HepG2 (cell line): ENCODE measurements at regions of chr5 and their contacts with region 1.

Region 1: GRCh38 chr5:76715736-76716455 is at the start of gene F2R:
- DNase-seq: peak; percentile 24
- ATAC-seq: peak; percentile 92
- H3K4me3 ChIP-seq: peak within 1 kb of the TSS; percentile 84 to 86 (median 86)
- H3K27ac ChIP-seq: no peak within 1 kb of the TSS
- H3K4me1 ChIP-seq: peaks cover 27% of the 10 kb centered on the region
- H3K27me3 ChIP-seq: no peaks in the 10 kb centered on the region
- CTCF ChIP-seq: peak; percentile 58
- EP300 ChIP-seq: no peak
- POLR2A ChIP-seq: no peak; a peak in 1 of 4 replicates
- RAD21 ChIP-seq: peak; percentile 84
- total RNA-seq, gene F2R: 4.6 and 8.3 TPM in 2 replicates

Region 2: DNA sequence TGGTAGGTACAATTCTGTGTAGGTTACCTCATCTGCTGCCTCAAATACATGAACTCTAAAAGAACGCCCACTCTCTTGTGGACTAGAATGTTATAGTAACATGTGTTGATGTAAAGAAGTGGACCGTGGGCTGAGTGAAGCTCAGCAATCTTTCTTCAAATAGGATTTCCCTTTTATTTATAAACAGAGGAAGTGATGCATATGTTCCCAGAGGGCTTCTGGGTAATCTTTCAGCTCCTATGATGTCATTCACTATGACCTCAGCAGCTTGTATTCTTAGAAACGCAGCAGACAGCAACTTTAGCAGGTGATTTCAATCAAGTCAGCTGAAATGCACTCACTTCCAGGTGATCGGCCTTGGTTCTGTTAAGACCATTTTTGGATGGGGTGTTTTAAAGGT is 107.1 kb before region 1 on chr5:
- CTCF ChIA-PET with region 1: no interaction called
- POLR2A ChIA-PET with region 1: no interaction called
- in situ Hi-C with region 1: no loop called
- intact Hi-C with region 1: no loop called
- DNase-seq: no peak
- ATAC-seq: no peak
- H3K4me3 ChIP-seq: no peak overlapping the region
- H3K27ac ChIP-seq: no peak overlapping the region
- H3K4me1 ChIP-seq: no peaks in the 10 kb centered on the region
- H3K27me3 ChIP-seq: no peaks in the 10 kb centered on the region
- CTCF ChIP-seq: no peak
- EP300 ChIP-seq: no peak
- POLR2A ChIP-seq: no peak
- RAD21 ChIP-seq: no peak

Region 3: DNA sequence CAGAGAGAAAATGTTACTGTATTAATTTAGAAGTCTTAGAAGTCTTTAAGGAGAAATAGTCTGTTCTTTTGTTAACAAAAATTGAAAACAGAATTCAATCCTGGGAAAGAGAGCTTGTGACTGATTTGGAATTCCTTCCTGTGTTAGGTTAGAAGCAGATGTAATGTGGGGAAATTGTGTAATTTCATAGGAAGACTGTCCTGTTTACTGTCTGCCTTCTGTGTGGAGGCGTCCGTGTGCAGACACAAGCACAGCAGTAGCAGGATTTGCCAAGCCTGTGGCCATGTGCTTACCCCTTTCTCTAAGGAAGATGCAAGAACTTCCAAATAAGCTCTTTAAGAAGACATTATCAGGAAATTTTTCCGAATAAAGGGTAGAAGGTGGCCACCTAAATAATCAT is 36.7 kb before region 1 on chr5:
- CTCF ChIA-PET with region 1: no interaction called
- POLR2A ChIA-PET with region 1: no interaction called
- in situ Hi-C with region 1: no loop called
- intact Hi-C with region 1: no loop called
- DNase-seq: no peak
- ATAC-seq: no peak
- H3K4me3 ChIP-seq: no peak overlapping the region
- H3K27ac ChIP-seq: no peak overlapping the region
- H3K4me1 ChIP-seq: peaks cover 8% of the 10 kb centered on the region
- H3K27me3 ChIP-seq: no peaks in the 10 kb centered on the region
- CTCF ChIP-seq: no peak
- EP300 ChIP-seq: no peak
- POLR2A ChIP-seq: no peak
- RAD21 ChIP-seq: no peak

Region 4: GRCh38 chr5:76733049-76733417 is 17.1 kb after region 1 on chr5:
- CTCF ChIA-PET with region 1: no interaction called
- POLR2A ChIA-PET with region 1: no interaction called
- in situ Hi-C with region 1: no loop called
- intact Hi-C with region 1: no loop called
- DNase-seq: no peak
- ATAC-seq: no peak
- H3K4me3 ChIP-seq: no peak overlapping the region
- H3K27ac ChIP-seq: no peak overlapping the region
- H3K4me1 ChIP-seq: no peaks in the 10 kb centered on the region
- H3K27me3 ChIP-seq: no peaks in the 10 kb centered on the region
- CTCF ChIP-seq: no peak
- EP300 ChIP-seq: no peak
- POLR2A ChIP-seq: no peak
- RAD21 ChIP-seq: no peak

Region 5: DNA sequence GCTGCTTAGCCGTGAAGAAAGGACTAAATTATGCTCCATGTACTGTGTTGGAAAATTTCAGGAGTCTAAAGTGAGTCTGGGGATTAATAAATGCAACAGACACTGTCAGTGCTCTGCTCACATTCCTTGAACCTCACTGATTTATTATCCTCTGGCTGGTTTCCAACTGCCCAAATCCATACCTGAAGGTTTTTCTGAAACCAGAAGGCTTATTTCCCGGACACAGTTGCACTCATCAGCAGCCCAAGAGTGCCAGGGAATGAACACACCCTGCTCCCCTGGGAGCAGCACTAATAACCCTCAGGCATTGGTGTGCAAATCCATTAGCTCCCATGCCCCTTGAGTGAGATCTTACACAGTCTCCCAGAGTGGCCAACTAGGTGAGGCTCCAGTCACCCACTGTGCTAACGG is 38.8 kb after region 1 on chr5:
- CTCF ChIA-PET with region 1: no interaction called
- POLR2A ChIA-PET with region 1: no interaction called
- in situ Hi-C with region 1: no loop called
- intact Hi-C with region 1: loop called (anchors 5 kb)
- DNase-seq: no peak
- ATAC-seq: no peak
- H3K4me3 ChIP-seq: no peak overlapping the region
- H3K27ac ChIP-seq: no peak overlapping the region
- H3K4me1 ChIP-seq: peaks cover 37% of the 10 kb centered on the region
- H3K27me3 ChIP-seq: peaks cover 1 to 4% of the 10 kb centered on the region in 2 experiments; a peak in 3 of 5 replicates
- CTCF ChIP-seq: no peak
- EP300 ChIP-seq: no peak
- POLR2A ChIP-seq: no peak
- RAD21 ChIP-seq: no peak

Region 6: GRCh38 chr5:76771705-76772405 is 56.0 kb after region 1 on chr5:
- CTCF ChIA-PET with region 1: interaction called, 11 read pairs
- POLR2A ChIA-PET with region 1: no interaction called
- in situ Hi-C with region 1: loop called (anchors 5 kb)
- intact Hi-C with region 1: loop called (anchors 1 kb)
- DNase-seq: no peak
- ATAC-seq: peak; percentile 42; the same call in 1 of the 3 replicates
- H3K4me3 ChIP-seq: no peak overlapping the region
- H3K27ac ChIP-seq: no peak overlapping the region
- H3K4me1 ChIP-seq: peaks cover 15% of the 10 kb centered on the region; the same call in 1 of the 2 replicates
- H3K27me3 ChIP-seq: no peaks in the 10 kb centered on the region
- CTCF ChIP-seq: no peak
- EP300 ChIP-seq: no peak
- POLR2A ChIP-seq: no peak
- RAD21 ChIP-seq: no peak